Activated naive CD4-positive, alpha-beta T cell treated with anti-CD3 and anti-CD28 coated beads for 36 hours (primary cell): ENCODE measurements at regions of chr2 and their contacts with region 1.

Region 1: GRCh38 chr2:27683390-27684071 is 19.8 kb downstream of the SLC4A1AP start:
- DNase-seq: peak; percentile 96
- H3K4me3 Mint-ChIP-seq: no peak overlapping the region
- H3K27ac Mint-ChIP-seq: peak overlapping the region; percentile 87
- H3K4me1 Mint-ChIP-seq: peaks cover 25% of the 10 kb centered on the region
- H3K27me3 Mint-ChIP-seq: no peaks in the 10 kb centered on the region

Region 2: GRCh38 chr2:27249891-27250651 is 433.5 kb before region 1 on chr2:
- CTCF ChIA-PET with region 1: no interaction called
- intact Hi-C with region 1: loop called (anchors 5 kb)
- DNase-seq: peak; percentile 76
- H3K4me3 Mint-ChIP-seq: no peak overlapping the region
- H3K27ac Mint-ChIP-seq: no peak overlapping the region
- H3K4me1 Mint-ChIP-seq: no peaks in the 10 kb centered on the region
- H3K27me3 Mint-ChIP-seq: peaks cover 4% of the 10 kb centered on the region

Region 3: GRCh38 chr2:27370026-27370815 is 313.3 kb before region 1 on chr2 and contains the starts of genes EIF2B4 and SNX17:
- CTCF ChIA-PET with region 1: interaction called, 4 read pairs
- intact Hi-C with region 1: loop called (anchors 5 kb)
- DNase-seq: peak; percentile 100
- H3K4me3 Mint-ChIP-seq: peak within 1 kb of the TSS; percentile 83
- H3K27ac Mint-ChIP-seq: peak within 1 kb of the TSS; percentile 95
- H3K4me1 Mint-ChIP-seq: peaks cover 30% of the 10 kb centered on the region
- H3K27me3 Mint-ChIP-seq: no peaks in the 10 kb centered on the region
- total RNA-seq, gene EIF2B4: 24.4 to 25.2 TPM
- total RNA-seq, gene SNX17: 68.5 to 75.5 TPM

Region 4: GRCh38 chr2:27428213-27428977 is 255.1 kb before region 1 on chr2 and contains the start of gene NRBP1:
- CTCF ChIA-PET with region 1: interaction called, 29 read pairs
- intact Hi-C with region 1: loop called (anchors 1 kb)
- DNase-seq: peak; percentile 94
- H3K4me3 Mint-ChIP-seq: peak within 1 kb of the TSS; percentile 98
- H3K27ac Mint-ChIP-seq: peak within 1 kb of the TSS; percentile 94
- H3K4me1 Mint-ChIP-seq: peaks cover 31% of the 10 kb centered on the region
- H3K27me3 Mint-ChIP-seq: no peaks in the 10 kb centered on the region
- total RNA-seq, gene NRBP1: 60.0 to 63.3 TPM

Region 5: DNA sequence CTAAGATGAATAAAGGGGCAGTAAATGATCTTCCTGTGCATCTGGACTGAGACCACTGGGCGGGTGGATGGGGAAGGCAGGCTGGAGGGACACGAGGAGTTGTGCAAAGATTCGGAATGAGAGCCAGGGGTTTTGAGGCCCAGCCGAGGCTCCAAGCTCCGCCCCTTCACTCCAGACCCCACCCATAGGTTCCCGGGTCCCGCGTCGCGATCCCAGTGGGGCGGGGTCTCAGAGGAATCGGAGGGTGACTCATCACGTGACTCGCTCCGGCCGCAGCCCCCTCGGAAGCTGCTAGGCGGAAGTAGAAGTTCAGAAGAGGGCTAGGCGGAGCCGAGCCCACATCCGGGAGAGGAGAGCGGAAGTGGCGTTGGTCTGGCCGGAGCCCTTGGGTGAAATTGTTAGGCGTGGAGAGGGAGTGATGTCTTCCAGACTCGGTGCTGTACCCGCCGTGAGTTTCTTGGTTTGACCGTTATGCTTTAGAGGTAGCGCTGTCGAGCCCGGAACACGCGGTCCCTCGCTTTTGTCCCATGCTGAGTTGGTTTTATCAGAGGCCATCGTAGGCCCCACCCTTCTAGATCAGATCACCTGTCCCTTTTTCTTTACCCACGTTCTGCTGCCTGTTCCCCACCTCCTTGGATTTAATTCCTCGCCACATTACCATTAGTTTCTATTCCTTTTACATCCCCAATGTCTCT is 100.7 kb before region 1 on chr2 and contains the start of gene ZNF512:
- CTCF ChIA-PET with region 1: interaction called, 6 read pairs
- intact Hi-C with region 1: loop called (anchors 5 kb)
- DNase-seq: peak; percentile 86
- H3K4me3 Mint-ChIP-seq: peak within 1 kb of the TSS; percentile 99
- H3K27ac Mint-ChIP-seq: peak within 1 kb of the TSS; percentile 90
- H3K4me1 Mint-ChIP-seq: peaks cover 46% of the 10 kb centered on the region
- H3K27me3 Mint-ChIP-seq: no peaks in the 10 kb centered on the region
- total RNA-seq, gene ZNF512: 34.7 to 35.8 TPM

Region 6: GRCh38 chr2:27647289-27647688 is 36.2 kb before region 1 on chr2:
- CTCF ChIA-PET with region 1: interaction called, 17 read pairs
- intact Hi-C with region 1: no loop called
- DNase-seq: no peak
- H3K4me3 Mint-ChIP-seq: no peak overlapping the region
- H3K27ac Mint-ChIP-seq: no peak overlapping the region
- H3K4me1 Mint-ChIP-seq: no peaks in the 10 kb centered on the region
- H3K27me3 Mint-ChIP-seq: no peaks in the 10 kb centered on the region

Region 7: DNA sequence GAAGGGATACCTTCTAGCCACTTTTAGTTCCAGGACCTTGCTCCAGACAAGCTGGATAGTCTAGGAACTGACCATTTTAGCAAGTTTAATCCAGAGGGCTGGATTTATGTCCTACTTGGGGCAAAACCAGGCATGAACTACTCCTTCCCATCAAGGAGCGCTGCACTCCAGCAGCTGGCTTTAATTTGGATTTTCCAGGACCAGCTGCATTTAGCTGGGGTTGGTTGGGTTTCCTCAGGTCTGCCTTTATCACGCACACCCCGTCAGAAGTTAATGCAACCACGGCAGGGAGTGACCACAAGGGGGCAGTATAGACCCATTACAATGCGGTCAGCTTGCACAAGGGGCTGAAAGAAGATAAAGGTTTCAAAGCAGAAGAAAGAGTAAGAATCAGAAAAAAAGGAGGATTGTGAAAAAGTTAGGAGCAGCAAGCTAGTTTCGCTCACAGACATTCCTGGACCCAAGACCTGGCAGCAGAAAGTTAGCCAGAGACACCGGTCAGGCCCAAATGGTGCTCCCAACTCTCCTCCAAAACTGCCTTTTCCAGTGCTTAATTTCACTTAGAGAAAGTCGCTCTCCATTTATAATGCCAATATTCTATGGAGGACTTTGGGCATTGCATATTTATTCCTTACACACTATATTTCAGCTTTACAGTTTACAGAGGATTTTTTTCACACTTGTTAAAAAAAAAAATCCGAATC is 20.3 kb after region 1 on chr2:
- CTCF ChIA-PET with region 1: interaction called, 30 read pairs
- intact Hi-C with region 1: no loop called
- DNase-seq: peak; percentile 95
- H3K4me3 Mint-ChIP-seq: no peak overlapping the region
- H3K27ac Mint-ChIP-seq: no peak overlapping the region
- H3K4me1 Mint-ChIP-seq: peaks cover 13% of the 10 kb centered on the region
- H3K27me3 Mint-ChIP-seq: no peaks in the 10 kb centered on the region

Region 8: GRCh38 chr2:27747827-27748352 is 64.4 kb after region 1 on chr2:
- CTCF ChIA-PET with region 1: no interaction called
- intact Hi-C with region 1: no loop called
- DNase-seq: no peak
- H3K4me3 Mint-ChIP-seq: no peak overlapping the region
- H3K27ac Mint-ChIP-seq: no peak overlapping the region
- H3K4me1 Mint-ChIP-seq: no peaks in the 10 kb centered on the region
- H3K27me3 Mint-ChIP-seq: peaks cover 11% of the 10 kb centered on the region

Region 9: DNA sequence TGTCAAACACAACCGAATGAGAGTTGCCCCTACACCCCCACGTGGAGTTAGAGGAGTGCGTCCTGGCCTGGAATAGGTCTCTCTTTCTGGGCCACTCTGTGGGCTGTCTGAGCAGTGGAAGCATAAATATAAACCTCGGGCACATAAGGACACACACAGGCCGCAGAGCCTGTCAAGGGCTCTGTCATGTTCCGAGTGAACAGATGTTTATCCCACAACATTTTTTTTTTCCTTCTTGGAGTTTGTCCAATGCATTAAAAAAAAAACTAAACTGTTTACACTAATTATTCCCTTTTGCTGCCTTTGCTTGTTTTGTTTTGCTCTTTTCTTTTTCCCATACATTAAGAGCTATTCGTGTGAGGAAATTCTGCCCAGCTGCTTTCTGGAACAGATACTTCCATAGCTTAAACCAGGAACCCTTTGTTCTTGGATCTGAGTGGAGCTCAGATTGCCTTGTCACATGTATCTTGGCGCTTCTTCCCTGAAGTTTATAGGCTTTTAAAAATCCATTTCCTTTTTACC is 480.8 kb after region 1 on chr2:
- CTCF ChIA-PET with region 1: no interaction called
- intact Hi-C with region 1: no loop called
- DNase-seq: no peak
- H3K4me3 Mint-ChIP-seq: no peak overlapping the region
- H3K27ac Mint-ChIP-seq: no peak overlapping the region
- H3K4me1 Mint-ChIP-seq: no peaks in the 10 kb centered on the region
- H3K27me3 Mint-ChIP-seq: no peaks in the 10 kb centered on the region